ENCODE measurements at regions of chr1 and their contacts with region 1.

Region 1: DNA sequence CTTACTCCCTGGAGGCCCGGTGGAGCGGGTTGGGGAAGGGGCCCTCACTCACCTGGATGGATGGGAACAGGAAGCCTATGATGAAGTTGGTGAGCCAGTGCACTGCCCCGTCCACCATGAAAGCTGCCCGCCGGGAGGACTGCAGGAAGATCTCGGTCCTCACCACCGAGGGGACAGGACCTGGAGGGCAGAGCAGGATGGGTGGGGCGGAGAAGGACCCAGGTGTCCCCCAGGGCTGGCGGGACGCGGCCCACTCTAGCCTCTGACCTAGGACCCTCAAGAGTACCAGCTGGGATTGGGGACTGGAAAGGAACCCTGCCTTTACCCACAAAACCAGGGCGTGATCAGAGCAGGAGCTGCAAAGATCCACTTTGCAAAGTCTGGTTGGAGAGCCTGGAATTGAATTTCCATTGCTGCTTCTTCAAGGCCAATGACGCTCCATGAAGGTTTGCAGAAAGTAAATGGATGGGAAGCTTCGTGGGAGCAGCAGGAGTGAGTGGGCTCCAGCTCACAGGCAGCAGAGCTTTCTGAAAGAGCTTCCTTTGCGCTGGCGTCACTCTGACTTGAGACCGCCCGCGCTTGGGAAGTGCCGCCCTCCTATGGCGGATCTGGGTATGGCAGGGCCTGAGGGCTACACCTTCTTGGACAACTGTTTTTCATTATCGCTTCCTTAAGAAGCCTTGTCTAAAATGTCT is 21.4 kb downstream of the SLC2A7 start:
- DNase-seq: peak; percentile 89
- ATAC-seq: peak; percentile 91

Region 2: GRCh38 chr1:8848663-8849386 is 156.0 kb before region 1 on chr1:
- intact Hi-C with region 1: no loop called
- DNase-seq: peak; percentile 96
- ATAC-seq: peak; percentile 99

Region 3: DNA sequence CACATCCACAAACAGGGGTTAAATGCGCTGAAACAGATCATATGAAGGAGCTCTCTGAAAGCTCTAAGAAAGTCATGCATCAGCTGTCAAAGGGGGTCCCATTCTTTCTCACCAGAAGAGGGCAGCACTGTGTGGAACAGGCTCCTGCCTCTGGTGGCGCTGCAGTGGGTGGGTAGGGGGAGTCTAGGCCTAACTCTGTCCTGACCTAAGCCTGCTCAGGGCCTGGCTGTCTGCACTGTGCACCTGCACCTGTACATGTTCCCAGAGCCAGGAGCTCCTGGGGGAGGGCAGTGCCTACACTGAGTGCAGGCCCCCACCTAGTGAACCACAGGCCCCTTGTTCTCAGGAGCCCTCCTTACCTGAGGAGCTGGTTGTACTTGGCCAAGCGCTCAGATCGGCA is 142.3 kb before region 1 on chr1:
- intact Hi-C with region 1: no loop called
- DNase-seq: no peak
- ATAC-seq: no peak

Region 4: GRCh38 chr1:8970870-8971337 is 33.9 kb before region 1 on chr1:
- intact Hi-C with region 1: no loop called
- DNase-seq: no peak
- ATAC-seq: no peak

Region 5: DNA sequence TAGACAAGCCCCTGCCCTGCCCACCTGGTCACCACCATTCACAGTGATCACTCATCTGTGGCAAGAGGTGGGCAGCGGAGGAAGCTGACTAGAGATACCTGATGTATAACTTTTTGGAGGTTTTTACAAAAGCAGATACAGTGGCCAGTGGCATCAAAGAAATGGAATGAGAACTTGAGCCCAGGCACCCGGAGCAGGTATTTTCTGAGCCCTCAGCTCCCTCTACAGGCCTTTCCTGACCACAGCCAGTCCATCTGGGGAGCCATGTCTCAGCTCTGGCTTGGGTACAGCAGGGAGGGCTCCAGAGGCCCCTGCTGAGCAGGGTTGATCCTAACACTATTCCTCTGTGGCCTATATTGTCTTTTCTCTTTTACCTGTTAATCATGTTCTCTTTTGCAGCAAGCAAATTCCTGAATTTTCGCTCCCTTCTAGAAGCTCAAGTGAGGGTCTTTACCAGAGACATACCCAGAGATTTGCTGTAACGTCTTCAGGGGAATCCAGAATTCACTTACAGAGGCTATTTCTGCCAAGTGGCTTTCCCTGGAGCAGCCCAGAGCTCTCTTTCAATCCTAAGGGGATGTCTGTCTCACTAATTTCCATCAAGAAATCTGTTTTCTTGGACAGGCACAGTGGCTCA is 96.8 kb after region 1 on chr1:
- intact Hi-C with region 1: loop called (anchors 5 kb)
- DNase-seq: no peak
- ATAC-seq: peak; percentile 64

Region 6: DNA sequence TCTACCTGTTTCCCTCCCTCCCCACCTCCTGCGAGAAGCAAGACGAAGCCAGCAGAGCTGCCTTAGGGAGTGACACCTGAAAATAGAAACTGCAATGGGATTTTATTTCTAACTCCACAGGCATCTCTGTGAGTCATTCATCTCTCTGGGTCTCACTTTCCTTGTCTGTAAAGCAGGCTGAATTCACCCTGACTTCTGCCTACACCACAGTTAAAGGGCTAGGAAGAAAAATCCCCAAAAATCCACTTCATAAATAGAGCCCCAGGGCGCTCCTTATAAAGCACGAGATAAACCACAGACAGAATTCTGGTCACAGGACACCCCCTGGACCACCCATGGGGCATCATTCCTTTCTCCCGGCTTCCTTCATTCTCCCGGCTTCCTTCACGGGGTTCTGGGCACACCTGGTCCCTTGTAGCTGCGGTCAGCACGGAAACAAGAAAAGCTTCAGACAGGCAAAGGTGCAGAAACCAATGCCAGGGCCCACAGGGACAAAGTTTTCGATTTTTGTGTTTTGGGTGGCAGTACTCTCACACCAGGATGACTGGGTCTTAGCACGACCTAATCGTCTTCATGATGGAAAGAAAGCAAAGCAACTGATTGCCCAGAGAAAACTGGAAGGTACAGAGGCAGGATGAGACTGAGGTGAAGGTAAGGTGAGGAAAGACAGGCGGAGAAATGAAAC is 226.9 kb after region 1 on chr1:
- intact Hi-C with region 1: no loop called
- DNase-seq: no peak
- ATAC-seq: no peak